A549 (cell line): ENCODE measurements at regions of chr11 and their contacts with region 1.

Region 1: DNA sequence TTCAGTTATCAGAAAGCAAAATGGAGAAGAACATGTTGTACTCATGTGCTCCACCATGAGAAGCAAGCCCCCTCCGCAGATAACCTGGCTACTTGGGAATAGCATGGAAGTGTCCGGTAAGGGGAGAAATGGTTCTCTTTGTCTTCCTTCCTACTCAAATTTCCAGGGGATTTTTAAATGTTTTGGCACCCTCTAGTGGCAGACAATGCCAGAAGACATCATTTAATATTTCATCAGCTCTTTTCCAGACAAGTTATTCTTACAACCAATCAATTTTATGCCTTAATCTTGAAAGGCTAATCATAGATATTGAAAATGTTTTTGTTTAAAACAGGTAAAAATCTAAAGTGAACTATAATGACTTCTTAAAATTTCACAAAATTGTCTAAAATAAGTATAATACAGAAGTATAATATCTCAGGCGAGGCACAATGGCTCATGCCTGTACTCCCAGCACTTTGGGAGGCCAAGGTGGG is 15.7 kb downstream of the CRTAM start:
- DNase-seq: peak; percentile 65 to 82
- ATAC-seq: peak; percentile 24 to 53; a peak in 3 of 6 replicates
- H3K4me3 ChIP-seq: no peak overlapping the region
- H3K27ac ChIP-seq: peak overlapping the region; percentile 93 to 94; a peak in 5 of 6 replicates
- H3K4me1 ChIP-seq: peaks cover 32% of the 10 kb centered on the region
- CTCF ChIP-seq: peak; percentile 83
- EP300 ChIP-seq: no peak
- POLR2A ChIP-seq: no peak
- RAD21 ChIP-seq: peak; percentile 84 to 87

Region 2: DNA sequence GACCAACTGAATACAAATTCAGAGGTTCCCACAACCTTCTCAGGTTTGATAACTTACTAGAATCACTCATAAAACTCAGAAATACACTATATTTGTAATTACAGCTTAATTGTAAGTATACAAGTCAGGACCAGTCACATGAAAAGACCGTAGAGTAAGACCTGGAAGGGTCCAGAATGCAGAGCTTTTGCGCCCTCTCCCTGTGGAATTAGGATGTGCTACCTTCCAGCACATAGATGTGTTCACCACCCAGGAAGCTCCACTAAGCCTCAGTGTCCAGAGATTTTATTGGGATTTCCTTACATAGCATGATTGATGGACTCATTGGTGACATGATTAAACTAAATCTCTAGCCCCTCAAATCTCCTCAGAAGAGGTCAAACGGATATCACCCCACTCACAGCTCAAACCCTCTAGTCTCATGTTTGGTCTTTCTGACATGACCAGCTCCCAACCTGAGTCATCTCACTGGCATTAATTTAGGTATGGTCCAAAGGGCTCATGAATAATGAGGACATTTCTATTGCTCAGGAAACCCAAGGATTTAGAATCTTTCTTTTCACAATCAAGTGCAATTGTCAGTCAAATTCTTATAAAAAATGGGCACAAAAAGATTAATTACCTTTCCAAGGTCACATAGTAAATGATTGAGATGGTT is 275.7 kb before region 1 on chr11:
- CTCF ChIA-PET with region 1: interaction called, 36 read pairs
- POLR2A ChIA-PET with region 1: no interaction called
- DNase-seq: peak in 1 of 2 experiments; percentile 28
- ATAC-seq: no peak
- H3K4me3 ChIP-seq: no peak overlapping the region
- H3K27ac ChIP-seq: no peak overlapping the region
- H3K4me1 ChIP-seq: 0 out of 3 replicates have a peak, but pooled peaks cover 9% of the 10 kb centered on the region
- CTCF ChIP-seq: no peak
- EP300 ChIP-seq: no peak
- POLR2A ChIP-seq: no peak
- RAD21 ChIP-seq: no peak

Region 3: GRCh38 chr11:122788781-122789535 is 65.1 kb before region 1 on chr11:
- CTCF ChIA-PET with region 1: interaction called, 17 read pairs
- POLR2A ChIA-PET with region 1: no interaction called
- DNase-seq: no peak
- ATAC-seq: peak; percentile 59 to 70; a peak in 5 of 6 replicates
- H3K4me3 ChIP-seq: no peak overlapping the region
- H3K27ac ChIP-seq: no peak overlapping the region
- H3K4me1 ChIP-seq: peaks cover 15% of the 10 kb centered on the region
- CTCF ChIP-seq: peak; percentile 30; the same call in 2 of the 3 replicates
- EP300 ChIP-seq: no peak
- POLR2A ChIP-seq: no peak
- RAD21 ChIP-seq: 0 out of 5 replicates have a peak, but pooled peaks of 1 of the 2 experiments have one; percentile 7

Region 4: DNA sequence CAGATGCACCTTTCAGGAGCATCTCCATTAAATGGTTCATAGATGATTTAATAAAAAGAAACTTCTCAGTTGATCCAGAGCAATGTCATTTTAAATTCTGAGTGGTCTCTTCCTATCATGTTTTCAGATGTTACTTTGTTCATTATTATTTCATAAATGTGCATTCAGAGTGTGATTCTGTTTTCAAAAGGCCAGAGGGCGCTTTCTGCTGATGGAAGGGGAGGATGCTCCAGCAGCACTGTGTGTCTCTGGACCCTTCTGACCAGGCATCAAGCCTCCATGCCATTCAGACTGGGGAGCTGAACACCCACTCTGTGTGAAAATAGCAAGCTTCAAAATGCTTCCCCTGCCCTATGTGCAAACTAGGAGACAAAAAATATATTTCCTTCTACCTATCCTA is 39.6 kb before region 1 on chr11:
- CTCF ChIA-PET with region 1: interaction called, 12 read pairs
- POLR2A ChIA-PET with region 1: interaction called, 3 read pairs
- DNase-seq: peak in 1 of 2 experiments; percentile 11
- ATAC-seq: peak; percentile 54 to 73; a peak in 4 of 6 replicates
- H3K4me3 ChIP-seq: no peak overlapping the region
- H3K27ac ChIP-seq: no peak overlapping the region
- H3K4me1 ChIP-seq: no peaks in the 10 kb centered on the region
- CTCF ChIP-seq: 0 out of 3 replicates have a peak, but pooled peaks have one; percentile 11
- EP300 ChIP-seq: no peak
- POLR2A ChIP-seq: no peak
- RAD21 ChIP-seq: peak in 1 of 2 experiments; percentile 28; a peak in 1 of 5 replicates

Region 5: GRCh38 chr11:123054301-123055065 is 200.5 kb after region 1 on chr11:
- CTCF ChIA-PET with region 1: interaction called, 11 read pairs
- POLR2A ChIA-PET with region 1: no interaction called
- DNase-seq: peak; percentile 55 to 70
- ATAC-seq: peak; percentile 76 to 92
- H3K4me3 ChIP-seq: no peak overlapping the region
- H3K27ac ChIP-seq: no peak overlapping the region
- H3K4me1 ChIP-seq: peaks cover 44% of the 10 kb centered on the region
- CTCF ChIP-seq: peak; percentile 60
- EP300 ChIP-seq: no peak
- POLR2A ChIP-seq: no peak
- RAD21 ChIP-seq: peak; percentile 28 to 31; a peak in 1 of 5 replicates